Dorsolateral prefrontal cortex (tissue), 120 donors: ENCODE measurements at regions of chr1 and their contacts with region 1.

Region 1: GRCh38 chr1:109984456-109985275 is at the start of gene AHCYL1:
- DNase-seq: peak; percentile 99 to 100 (median 100)
- H3K4me3 ChIP-seq: peak within 1 kb of the TSS; percentile 67 to 98 (median 91)
- H3K27ac ChIP-seq: peak within 1 kb of the TSS; percentile 68 to 99 (median 96)
- H3K27me3 ChIP-seq: no peaks in the 10 kb centered on the region
- CTCF ChIP-seq: peak; percentile 95 to 100 (median 99)
- total RNA-seq, gene AHCYL1: 172 to 665 (median 292) TPM

Region 2: GRCh38 chr1:109643385-109644230 is 341.1 kb before region 1 on chr1:
- intact Hi-C with region 1: loop called in 1 of 2 experiments (anchors 5 kb)
- DNase-seq: peak in 5 of 10 donors; percentile 50 to 71 (median 63)
- H3K4me3 ChIP-seq: peak overlapping the region in 11 of 59 donors; percentile 2 to 28 (median 13)
- H3K27ac ChIP-seq: peak overlapping the region in 3 of 59 donors; percentile 11 to 47 (median 28)
- H3K27me3 ChIP-seq: no peaks in the 10 kb centered on the region
- CTCF ChIP-seq: peak; percentile 38 to 81 (median 65)

Region 3: DNA sequence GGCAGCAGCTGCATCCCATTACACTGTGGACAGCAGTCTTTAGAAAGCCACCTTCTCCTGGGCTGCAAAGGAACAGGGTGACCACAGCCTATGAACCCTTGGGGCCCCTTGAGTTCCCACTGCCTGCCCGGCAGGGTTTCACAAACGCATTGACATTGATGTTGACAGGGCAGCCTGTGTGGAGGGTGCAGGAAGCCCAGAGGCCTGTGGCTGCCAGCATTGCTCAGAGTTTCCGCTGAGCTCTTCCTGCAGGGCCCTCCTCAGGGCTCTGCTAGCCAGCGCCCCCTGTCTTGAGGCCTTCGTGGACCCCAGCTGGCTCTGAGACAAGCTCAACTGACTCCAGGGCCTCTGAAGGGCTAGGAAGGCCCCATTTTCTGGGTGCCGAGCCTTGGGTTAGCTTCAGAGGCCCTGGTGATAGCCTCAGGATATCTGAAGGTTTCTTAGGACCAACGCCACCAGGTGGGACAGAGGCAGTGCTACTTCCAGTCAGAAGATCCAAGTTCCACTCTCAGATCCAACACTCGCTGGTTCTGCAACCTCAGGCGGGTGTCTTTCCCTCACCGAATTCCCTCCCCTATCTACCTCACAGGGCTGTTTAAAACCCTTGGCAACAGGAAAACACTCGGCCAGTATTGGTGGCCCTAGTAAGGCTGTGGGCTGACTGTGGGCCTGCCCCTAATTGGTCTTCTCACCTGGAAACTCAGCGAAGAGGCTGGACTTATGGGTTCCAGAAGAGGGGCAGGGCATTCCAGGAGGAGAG is 193.8 kb before region 1 on chr1:
- intact Hi-C with region 1: loop called (anchors 5 kb)
- DNase-seq: peak in 8 of 10 donors; percentile 15 to 59 (median 37)
- H3K4me3 ChIP-seq: no peak overlapping the region
- H3K27ac ChIP-seq: peak overlapping the region in 9 of 59 donors; percentile 9 to 51 (median 38)
- H3K27me3 ChIP-seq: no peaks in the 10 kb centered on the region
- CTCF ChIP-seq: peak in 42 of 56 donors; percentile 9 to 46 (median 28)

Region 4: DNA sequence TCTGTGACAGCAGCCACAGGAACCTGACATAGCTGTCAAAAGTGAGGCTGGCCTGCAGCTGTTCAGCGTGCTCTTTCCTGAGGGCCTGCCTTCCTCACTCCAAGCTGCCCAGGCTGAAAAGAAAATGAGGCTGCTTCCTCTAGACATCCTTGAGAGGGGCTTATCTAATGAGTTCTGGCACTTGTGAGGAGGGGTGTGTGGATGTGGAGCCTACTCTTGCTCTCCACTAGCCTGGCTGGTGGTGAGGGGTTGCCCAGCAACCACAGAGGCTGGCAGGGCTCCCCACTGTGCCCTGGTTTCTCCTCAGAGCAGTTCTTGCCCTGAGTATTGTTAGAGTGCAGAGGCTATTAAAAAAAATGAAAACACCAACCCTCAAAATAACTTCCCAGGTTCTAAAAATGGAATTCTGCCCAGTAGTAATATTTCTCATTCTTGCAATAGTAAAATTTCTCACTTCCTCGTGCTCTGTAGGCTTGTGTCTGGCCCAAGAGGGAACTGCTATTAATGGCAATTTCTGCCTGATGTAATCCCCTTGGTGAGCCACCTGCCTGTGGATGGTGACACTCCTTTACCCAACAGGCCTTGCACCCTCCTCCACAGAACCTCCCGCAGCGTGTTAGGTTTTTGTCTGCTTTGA is 168.4 kb before region 1 on chr1:
- intact Hi-C with region 1: no loop called
- DNase-seq: no peak
- H3K4me3 ChIP-seq: no peak overlapping the region
- H3K27ac ChIP-seq: peak overlapping the region in 39 of 59 donors; percentile 1 to 95 (median 71)
- H3K27me3 ChIP-seq: no peaks in the 10 kb centered on the region
- CTCF ChIP-seq: no peak

Region 5: DNA sequence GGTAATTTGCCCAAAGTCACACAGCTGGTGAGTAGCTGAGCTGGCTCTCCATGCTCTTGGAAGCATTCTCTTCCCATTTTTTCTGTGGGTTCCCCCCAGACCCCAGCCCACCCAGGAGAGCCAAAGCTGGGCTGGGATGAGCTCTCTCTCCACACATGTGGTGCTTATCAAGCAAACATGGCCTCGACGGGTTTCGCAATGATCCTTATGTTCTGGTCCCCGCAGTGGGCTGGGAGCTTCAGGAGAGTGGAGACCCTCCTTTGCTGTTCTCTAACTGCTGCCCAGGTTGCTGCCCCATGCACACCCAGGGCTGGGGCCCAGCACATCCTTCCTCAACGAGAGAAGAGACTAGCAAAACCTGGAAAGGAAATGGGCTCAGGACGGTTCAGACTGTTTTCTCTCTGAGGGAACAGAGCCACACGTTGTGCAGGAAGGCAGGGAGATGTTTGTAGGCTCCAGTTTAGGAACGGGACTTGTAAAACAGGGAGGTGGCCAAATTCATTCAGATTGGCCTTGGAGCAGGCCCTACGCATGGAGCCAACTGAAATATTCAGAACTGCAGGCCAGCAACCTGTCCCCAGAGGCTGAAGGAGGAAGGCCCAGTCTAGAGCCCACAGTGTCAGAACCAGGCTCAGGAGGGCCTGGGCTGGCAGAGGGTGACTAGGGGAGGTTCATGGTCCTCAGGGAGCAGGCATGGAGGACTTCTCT is 101.3 kb before region 1 on chr1:
- intact Hi-C with region 1: loop called (anchors 5 to 10 kb)
- DNase-seq: no peak
- H3K4me3 ChIP-seq: no peak overlapping the region
- H3K27ac ChIP-seq: peak overlapping the region; percentile 58 to 99 (median 93)
- H3K27me3 ChIP-seq: no peaks in the 10 kb centered on the region
- CTCF ChIP-seq: no peak

Region 6: DNA sequence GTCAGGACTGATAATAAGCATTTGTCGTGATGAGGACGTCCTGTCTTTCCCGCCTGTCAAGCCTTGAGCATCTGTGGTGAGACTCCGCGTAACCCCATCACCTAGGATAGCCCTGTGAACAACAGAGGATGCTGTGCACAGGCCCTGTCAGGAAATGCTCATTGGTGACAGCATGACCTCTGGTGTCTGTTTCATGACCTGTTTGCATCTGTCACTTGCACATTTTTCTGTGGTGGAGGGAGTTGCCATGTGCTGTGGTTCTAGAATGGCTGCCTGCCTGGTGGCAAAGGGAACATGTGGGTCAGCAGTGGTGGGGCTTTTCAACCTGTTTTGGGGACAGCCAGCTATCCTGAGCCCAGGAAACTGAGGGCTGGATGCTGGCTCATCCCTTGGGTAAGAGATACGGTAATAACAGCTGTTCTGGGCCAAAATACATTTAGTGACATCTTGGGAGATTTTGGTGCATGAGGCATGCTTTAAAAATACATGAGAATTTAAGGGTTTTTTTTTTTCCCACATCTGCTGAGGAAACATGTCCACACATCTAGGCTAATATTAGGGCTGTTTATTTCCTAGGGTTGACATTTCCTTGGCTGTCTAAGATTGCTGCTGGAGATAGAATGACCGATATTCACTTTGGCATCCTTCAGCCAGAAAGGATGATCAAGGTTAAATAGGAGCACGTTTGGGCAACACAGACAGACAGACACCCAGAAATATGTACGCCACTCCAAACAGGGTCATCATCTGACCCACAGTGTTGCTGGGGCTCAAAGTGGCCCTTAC is 278.4 kb after region 1 on chr1:
- intact Hi-C with region 1: no loop called
- DNase-seq: no peak
- H3K4me3 ChIP-seq: no peak overlapping the region
- H3K27ac ChIP-seq: no peak overlapping the region
- H3K27me3 ChIP-seq: peaks cover 0 to 4% (median 0%) of the 10 kb centered on the region in 45 donors
- CTCF ChIP-seq: no peak